ENCODE measurements at regions of chr21 and their contacts with region 1.

Region 1: GRCh38 chr21:42453509-42454229 is 42.4 kb downstream of the RSPH1 start:
- DNase-seq: no peak
- ATAC-seq: no peak
- H3K4me3 ChIP-seq: no peak overlapping the region
- H3K4me3 Mint-ChIP-seq: no peak overlapping the region
- H3K27ac ChIP-seq: no peak overlapping the region
- H3K27ac Mint-ChIP-seq: no peak overlapping the region
- H3K4me1 ChIP-seq: peaks cover 9% of the 10 kb centered on the region
- H3K4me1 Mint-ChIP-seq: peaks cover 0 to 15% of the 10 kb centered on the region in 2 donors
- H3K27me3 ChIP-seq: no peaks in the 10 kb centered on the region
- H3K27me3 Mint-ChIP-seq: peaks cover 21 to 40% of the 10 kb centered on the region in 2 donors
- CTCF ChIP-seq: no peak

Region 2: GRCh38 chr21:42145569-42146272 is 307.9 kb before region 1 on chr21:
- intact Hi-C with region 1: loop called (anchors 2 kb)
- DNase-seq: peak; percentile 54 to 88
- ATAC-seq: peak; percentile 84 to 93 (median 92)
- H3K4me3 ChIP-seq: no peak overlapping the region
- H3K4me3 Mint-ChIP-seq: no peak overlapping the region
- H3K27ac ChIP-seq: no peak overlapping the region
- H3K27ac Mint-ChIP-seq: peak overlapping the region; percentile 31 to 78
- H3K4me1 ChIP-seq: peaks cover 14% of the 10 kb centered on the region
- H3K4me1 Mint-ChIP-seq: peaks cover 8 to 12% of the 10 kb centered on the region in 2 donors
- H3K27me3 ChIP-seq: no peaks in the 10 kb centered on the region
- H3K27me3 Mint-ChIP-seq: peaks cover 12 to 18% of the 10 kb centered on the region in 2 donors
- CTCF ChIP-seq: peak; percentile 86

Region 3: DNA sequence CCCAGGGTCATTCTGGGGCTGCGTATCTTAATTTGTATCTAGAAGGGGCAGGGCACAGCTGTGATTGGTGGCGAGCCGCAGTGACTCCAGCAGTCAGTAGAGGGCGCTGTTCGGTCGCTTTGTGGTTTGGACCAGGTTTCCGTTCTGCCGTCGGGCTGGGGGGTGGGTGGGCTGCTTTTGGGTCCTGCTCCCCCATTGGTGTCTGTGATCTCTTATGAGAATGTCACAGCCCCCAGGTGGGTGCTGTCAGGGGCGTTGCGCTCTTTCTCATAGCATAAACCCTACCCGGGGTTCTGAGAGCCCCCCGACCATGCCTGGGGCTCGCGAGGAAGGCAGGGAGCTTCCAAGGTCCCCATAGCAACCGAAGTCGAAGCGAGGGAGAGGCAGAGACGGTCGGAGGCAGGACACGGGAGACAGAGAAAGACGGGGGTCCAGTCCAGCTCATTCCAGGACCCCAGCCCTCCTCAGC is 143.9 kb before region 1 on chr21:
- intact Hi-C with region 1: loop called (anchors 1 kb)
- DNase-seq: peak; percentile 61 to 84
- ATAC-seq: peak; percentile 74 to 80 (median 77)
- H3K4me3 ChIP-seq: no peak overlapping the region
- H3K4me3 Mint-ChIP-seq: no peak overlapping the region
- H3K27ac ChIP-seq: no peak overlapping the region
- H3K27ac Mint-ChIP-seq: no peak overlapping the region
- H3K4me1 ChIP-seq: peaks cover 13% of the 10 kb centered on the region
- H3K4me1 Mint-ChIP-seq: no peaks in the 10 kb centered on the region
- H3K27me3 ChIP-seq: peaks cover 4% of the 10 kb centered on the region
- H3K27me3 Mint-ChIP-seq: peaks cover 14 to 20% of the 10 kb centered on the region in 2 donors
- CTCF ChIP-seq: peak; percentile 67

Region 4: DNA sequence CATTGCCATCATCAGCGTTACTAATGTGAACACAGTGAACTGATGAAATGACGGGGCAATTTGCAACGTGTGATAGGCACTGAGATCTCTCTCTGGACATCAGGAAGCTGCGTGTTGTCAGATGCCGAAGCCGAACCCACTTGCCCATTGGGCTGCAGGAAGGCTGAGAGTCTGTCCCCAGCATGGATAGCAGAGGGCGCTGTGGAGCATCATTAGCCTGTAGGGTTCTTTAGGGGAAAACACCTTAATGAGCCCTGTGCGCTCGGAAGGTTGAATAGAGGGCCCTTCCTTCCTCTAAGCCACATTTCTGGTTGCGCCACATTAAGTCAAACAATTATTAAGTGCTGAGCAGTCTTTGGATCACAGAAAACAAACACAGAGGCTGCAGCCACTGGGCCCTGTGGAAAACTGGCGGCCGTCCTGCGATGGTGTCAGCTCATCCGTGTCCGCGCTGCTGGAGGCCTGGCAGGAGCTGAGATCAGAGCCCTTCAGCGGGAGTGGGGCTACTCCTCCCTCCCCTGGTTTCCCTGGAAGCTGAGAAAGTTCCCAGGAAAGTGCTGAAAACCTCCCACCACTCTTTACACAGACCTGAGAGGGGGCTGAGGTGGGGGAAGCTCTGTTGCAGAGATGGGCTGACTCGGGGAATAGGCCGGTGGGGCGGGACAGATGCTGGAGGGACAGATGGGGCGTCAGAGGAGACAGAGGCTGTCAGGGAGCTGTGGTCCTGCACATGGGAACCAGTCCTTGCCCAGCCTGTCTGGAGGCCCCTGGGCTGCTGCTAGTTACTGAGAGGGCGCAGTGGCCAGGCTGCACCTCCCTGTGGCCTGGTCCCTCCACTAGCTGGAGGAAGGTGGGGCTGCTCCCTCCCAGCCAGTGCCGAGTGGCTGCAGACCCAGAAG is 115.6 kb before region 1 on chr21:
- intact Hi-C with region 1: loop called (anchors 1 kb)
- DNase-seq: peak; percentile 71 to 94
- ATAC-seq: peak; percentile 83 to 100 (median 99)
- H3K4me3 ChIP-seq: no peak overlapping the region
- H3K4me3 Mint-ChIP-seq: no peak overlapping the region
- H3K27ac ChIP-seq: no peak overlapping the region
- H3K27ac Mint-ChIP-seq: no peak overlapping the region
- H3K4me1 ChIP-seq: peaks cover 8% of the 10 kb centered on the region
- H3K4me1 Mint-ChIP-seq: peaks cover 6 to 8% of the 10 kb centered on the region in 2 donors
- H3K27me3 ChIP-seq: peaks cover 6% of the 10 kb centered on the region
- H3K27me3 Mint-ChIP-seq: peaks cover 19 to 58% of the 10 kb centered on the region in 2 donors
- CTCF ChIP-seq: peak; percentile 70

Region 5: GRCh38 chr21:42424914-42425541 is 28.6 kb before region 1 on chr21:
- intact Hi-C with region 1: no loop called
- DNase-seq: peak; percentile 79 to 92
- ATAC-seq: peak; percentile 69 to 89 (median 89)
- H3K4me3 ChIP-seq: no peak overlapping the region
- H3K4me3 Mint-ChIP-seq: peak overlapping the region; percentile 83
- H3K27ac ChIP-seq: peak overlapping the region; percentile 74
- H3K27ac Mint-ChIP-seq: peak overlapping the region; percentile 68 to 76
- H3K4me1 ChIP-seq: peaks cover 63% of the 10 kb centered on the region
- H3K4me1 Mint-ChIP-seq: peaks cover 71% of the 10 kb centered on the region in 2 donors
- H3K27me3 ChIP-seq: peaks cover 34% of the 10 kb centered on the region
- H3K27me3 Mint-ChIP-seq: peaks cover 46 to 60% of the 10 kb centered on the region in 2 donors
- CTCF ChIP-seq: no peak

Measured in natural killer cell (primary cell).